Upper lobe of right lung (tissue), 1 donor: ENCODE measurements at regions of chr3 and their contacts with region 1.

Region 1: DNA sequence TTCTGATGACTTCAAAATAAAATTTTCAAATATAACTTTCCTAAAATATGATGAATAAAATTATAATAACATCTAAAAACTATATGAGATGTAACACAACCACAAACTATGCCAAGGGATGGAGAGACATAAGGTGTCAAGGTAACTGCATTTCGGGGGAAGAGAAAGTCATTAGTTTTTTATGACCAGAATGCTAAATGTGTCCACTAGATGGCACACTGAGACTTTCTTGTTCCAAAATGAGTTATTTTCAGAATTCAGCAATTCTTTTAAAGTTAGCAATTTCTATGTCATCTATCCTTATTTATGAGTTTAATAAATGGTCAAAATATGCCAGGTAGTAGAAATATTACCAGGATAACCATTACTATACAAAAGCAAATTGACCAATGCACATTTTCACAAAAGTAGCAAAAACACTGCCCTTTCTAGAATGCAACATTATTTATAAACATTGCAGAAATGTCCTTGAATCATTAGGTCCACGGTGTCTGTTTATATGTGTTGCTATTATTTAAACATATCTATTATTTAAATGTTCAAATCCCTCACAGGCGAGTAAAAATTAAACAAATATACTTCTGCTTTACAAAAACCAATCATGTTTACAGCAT is 374.2 kb downstream of the PLCL2 start:
- DNase-seq: no peak
- ATAC-seq: peak; percentile 45
- H3K4me3 ChIP-seq: no peak overlapping the region
- H3K27ac ChIP-seq: no peak overlapping the region
- H3K4me1 ChIP-seq: no peaks in the 10 kb centered on the region
- H3K27me3 ChIP-seq: no peaks in the 10 kb centered on the region
- CTCF ChIP-seq: peak; percentile 84

Region 2: DNA sequence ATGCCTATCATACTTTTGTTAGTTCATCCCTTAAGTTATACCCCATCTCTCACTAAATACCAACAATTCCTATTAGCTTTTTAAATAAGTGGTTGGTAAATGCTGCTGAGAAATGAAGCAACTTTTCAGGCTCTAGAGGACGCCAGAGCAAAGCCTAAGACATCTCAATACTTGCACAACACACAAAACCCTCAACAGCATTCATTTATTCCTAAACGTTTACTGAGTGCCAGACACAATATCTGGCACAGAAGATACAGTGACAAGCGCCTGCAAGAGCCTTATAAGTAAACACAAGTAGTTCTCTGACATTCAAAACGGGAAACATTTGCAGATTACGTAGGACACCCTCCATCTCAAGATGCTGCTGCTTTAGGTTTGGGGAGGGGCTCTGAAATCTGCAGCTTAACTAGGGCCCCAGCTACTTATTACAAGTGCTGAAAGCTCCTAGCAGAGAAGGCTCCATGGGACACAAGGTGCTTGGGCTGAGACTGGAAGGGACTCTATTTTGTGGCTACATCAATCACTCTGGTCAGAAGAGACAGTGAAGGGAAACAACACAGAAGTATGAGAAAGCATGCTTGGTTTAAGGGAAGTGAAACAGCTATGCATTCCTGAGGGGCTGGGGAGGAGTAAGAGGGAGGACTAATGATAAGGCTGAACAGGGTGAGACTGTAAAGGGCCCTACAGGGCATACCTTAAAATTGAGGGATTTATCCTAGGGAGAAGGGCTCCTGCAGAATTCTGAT is 62.9 kb before region 1 on chr3:
- intact Hi-C with region 1: no loop called
- DNase-seq: no peak
- ATAC-seq: peak; percentile 75
- H3K4me3 ChIP-seq: no peak overlapping the region
- H3K27ac ChIP-seq: no peak overlapping the region
- H3K4me1 ChIP-seq: no peaks in the 10 kb centered on the region
- H3K27me3 ChIP-seq: no peaks in the 10 kb centered on the region
- CTCF ChIP-seq: peak; percentile 23

Region 3: DNA sequence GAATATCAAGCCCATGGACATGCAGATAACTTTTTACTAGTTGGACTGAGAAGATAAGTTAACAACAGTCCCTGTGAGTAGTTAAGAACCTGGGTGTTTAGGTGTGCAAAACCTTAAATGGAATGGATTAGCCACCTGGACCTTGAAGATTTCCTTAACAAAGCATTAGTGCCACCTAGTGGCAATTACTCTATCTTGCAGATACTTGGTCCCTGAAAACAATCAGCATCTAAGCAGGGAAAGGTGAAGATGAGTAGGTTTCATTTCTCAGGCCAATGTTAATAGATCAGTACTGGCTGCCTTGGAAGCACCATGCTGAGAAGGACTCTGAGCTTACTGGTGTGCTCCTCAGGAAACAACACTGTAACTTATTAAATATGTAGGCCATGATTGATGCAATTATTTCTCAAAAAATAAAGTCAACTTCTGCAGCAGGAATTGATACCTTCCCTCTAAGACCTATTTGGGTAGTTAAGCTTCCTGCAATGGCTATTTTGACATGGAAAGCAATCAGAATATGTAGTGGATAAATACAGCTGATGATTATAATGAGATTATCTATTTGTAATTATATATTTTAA is 154.1 kb after region 1 on chr3:
- intact Hi-C with region 1: loop called (anchors 10 kb)
- DNase-seq: no peak
- ATAC-seq: peak; percentile 86
- H3K4me3 ChIP-seq: no peak overlapping the region
- H3K27ac ChIP-seq: no peak overlapping the region
- H3K4me1 ChIP-seq: no peaks in the 10 kb centered on the region
- H3K27me3 ChIP-seq: no peaks in the 10 kb centered on the region
- CTCF ChIP-seq: peak; percentile 80